GM10248 (cell line): ENCODE measurements at regions of chr1 and their contacts with region 1.

Region 1: GRCh38 chr1:27451343-27451742 is 38.6 kb downstream of the WASF2 start:
- DNase-seq: no peak
- CTCF ChIP-seq: no peak

Region 2: DNA sequence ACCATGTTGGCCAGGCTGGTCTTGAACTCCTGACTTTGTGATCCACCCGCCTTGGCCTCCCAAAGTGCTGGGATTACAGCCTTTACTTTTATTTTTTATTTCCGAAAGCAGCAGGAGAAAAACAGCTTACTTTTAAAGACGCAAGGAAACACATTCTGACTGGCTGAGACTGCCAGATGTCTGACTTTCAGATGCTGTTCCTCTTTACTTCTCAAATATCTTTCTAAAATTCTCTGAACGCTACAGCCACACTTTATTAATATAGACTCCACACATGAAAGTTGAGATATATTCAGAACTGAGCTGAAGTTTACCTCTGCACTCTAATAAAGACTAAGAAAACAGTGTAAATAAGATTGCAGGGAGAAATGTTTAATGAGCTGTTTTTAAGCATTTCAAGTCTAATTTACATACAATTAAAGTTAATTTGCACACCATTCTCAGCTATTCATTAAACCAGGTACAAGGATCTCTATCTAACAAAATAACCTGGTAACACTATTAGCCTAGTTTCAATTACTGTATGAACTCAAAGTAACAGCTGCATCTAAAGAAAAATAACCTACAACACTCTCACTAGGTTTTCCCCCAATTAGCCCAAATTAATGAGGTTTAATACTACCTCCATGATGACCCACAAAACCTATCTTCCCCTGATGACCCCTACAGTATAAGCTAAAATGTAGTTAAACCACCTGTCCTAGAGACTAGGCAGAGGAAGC is 13.7 kb after region 1 on chr1:
- CTCF ChIA-PET with region 1: interaction called, 19 read pairs
- POLR2A ChIA-PET with region 1: interaction called, 3 read pairs
- DNase-seq: no peak
- CTCF ChIP-seq: no peak